CD4-positive, alpha-beta T cell (primary cell): ENCODE measurements at regions of chr2 and their contacts with region 1.

Region 1: GRCh38 chr2:17719562-17720371 is 33.8 kb downstream of the SMC6 start:
- DNase-seq: peak in 3 of 14 experiments; percentile 27 to 35 (median 34)
- ATAC-seq: no peak
- H3K4me3 ChIP-seq: no peak overlapping the region
- H3K4me3 Mint-ChIP-seq: no peak overlapping the region
- H3K27ac ChIP-seq: no peak overlapping the region
- H3K27ac Mint-ChIP-seq: no peak overlapping the region
- H3K4me1 ChIP-seq: no peaks in the 10 kb centered on the region
- H3K4me1 Mint-ChIP-seq: no peaks in the 10 kb centered on the region
- H3K27me3 ChIP-seq: no peaks in the 10 kb centered on the region
- H3K27me3 Mint-ChIP-seq: no peaks in the 10 kb centered on the region
- CTCF ChIP-seq: peak; percentile 87

Region 2: GRCh38 chr2:18178736-18179349 is 459.1 kb after region 1 on chr2:
- CTCF ChIA-PET with region 1: no interaction called
- POLR2A ChIA-PET with region 1: no interaction called
- intact Hi-C with region 1: loop called in 1 of 2 experiments (anchors 5 kb)
- DNase-seq: peak in 7 of 14 experiments; percentile 1 to 50 (median 23)
- ATAC-seq: no peak
- H3K4me3 ChIP-seq: no peak overlapping the region
- H3K4me3 Mint-ChIP-seq: no peak overlapping the region
- H3K27ac ChIP-seq: no peak overlapping the region
- H3K27ac Mint-ChIP-seq: no peak overlapping the region
- H3K4me1 ChIP-seq: no peaks in the 10 kb centered on the region
- H3K4me1 Mint-ChIP-seq: no peaks in the 10 kb centered on the region
- H3K27me3 ChIP-seq: no peaks in the 10 kb centered on the region
- H3K27me3 Mint-ChIP-seq: peaks cover 13% of the 10 kb centered on the region
- CTCF ChIP-seq: peak; percentile 72

Region 3: GRCh38 chr2:18378020-18378653 is 658.4 kb after region 1 on chr2:
- CTCF ChIA-PET with region 1: no interaction called
- POLR2A ChIA-PET with region 1: no interaction called
- intact Hi-C with region 1: loop called in 1 of 2 experiments (anchors 5 kb)
- DNase-seq: peak in 6 of 14 experiments; percentile 3 to 34 (median 22)
- ATAC-seq: no peak
- H3K4me3 ChIP-seq: no peak overlapping the region
- H3K4me3 Mint-ChIP-seq: no peak overlapping the region
- H3K27ac ChIP-seq: no peak overlapping the region
- H3K27ac Mint-ChIP-seq: no peak overlapping the region
- H3K4me1 ChIP-seq: peaks cover 2% of the 10 kb centered on the region
- H3K4me1 Mint-ChIP-seq: no peaks in the 10 kb centered on the region
- H3K27me3 ChIP-seq: peaks cover 0 to 11% of the 10 kb centered on the region in 2 experiments
- H3K27me3 Mint-ChIP-seq: peaks cover 21% of the 10 kb centered on the region
- CTCF ChIP-seq: peak; percentile 72